ENCODE measurements at regions of chr9 and their contacts with region 1.

Region 1: DNA sequence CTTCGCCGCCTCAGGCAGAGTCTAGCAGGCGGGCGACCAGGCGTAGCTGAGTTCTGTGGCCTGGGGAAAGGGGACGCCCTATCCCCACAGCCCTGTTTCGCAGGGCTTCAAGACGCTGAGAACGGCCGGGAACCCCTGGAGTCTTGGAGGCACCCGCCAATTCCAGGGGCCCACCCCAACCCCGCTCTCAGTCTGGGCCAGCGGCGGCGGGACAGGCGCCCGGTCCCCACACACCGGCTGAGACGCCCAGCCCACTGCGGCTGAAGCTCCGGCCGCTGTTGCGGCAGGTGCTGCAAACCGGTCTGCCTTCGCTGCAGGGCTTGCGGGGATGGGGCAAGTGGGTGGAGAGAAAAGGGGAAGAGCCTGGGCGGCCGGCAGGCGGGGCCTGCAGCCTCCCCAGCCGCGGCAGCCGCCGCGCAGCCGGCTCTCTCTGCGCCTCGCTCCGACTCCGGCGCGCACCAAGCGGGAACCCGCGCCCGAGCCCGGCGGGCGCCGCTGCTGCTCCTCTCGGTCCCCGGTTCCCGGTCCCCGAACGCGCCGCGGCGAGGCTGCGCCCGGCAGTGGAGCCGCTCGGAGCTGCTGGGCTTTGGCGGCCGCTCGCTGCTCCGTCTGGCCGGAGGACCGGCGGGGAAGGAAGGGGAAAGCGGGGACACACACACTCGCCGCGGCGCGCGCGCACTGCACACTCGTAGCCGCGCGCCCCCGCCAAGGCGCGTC is at the start of gene PIP5K1B:
- DNase-seq: peak; percentile 69 to 90 (median 86)
- ATAC-seq: peak; percentile 92
- H3K4me3 ChIP-seq: peak within 1 kb of the TSS; percentile 54
- H3K27ac ChIP-seq: peak within 1 kb of the TSS; percentile 70
- H3K4me1 ChIP-seq: peaks cover 5% of the 10 kb centered on the region
- H3K27me3 ChIP-seq: no peaks in the 10 kb centered on the region
- total RNA-seq, gene PIP5K1B: 38.1 to 81.5 (median 70.0) TPM

Region 2: DNA sequence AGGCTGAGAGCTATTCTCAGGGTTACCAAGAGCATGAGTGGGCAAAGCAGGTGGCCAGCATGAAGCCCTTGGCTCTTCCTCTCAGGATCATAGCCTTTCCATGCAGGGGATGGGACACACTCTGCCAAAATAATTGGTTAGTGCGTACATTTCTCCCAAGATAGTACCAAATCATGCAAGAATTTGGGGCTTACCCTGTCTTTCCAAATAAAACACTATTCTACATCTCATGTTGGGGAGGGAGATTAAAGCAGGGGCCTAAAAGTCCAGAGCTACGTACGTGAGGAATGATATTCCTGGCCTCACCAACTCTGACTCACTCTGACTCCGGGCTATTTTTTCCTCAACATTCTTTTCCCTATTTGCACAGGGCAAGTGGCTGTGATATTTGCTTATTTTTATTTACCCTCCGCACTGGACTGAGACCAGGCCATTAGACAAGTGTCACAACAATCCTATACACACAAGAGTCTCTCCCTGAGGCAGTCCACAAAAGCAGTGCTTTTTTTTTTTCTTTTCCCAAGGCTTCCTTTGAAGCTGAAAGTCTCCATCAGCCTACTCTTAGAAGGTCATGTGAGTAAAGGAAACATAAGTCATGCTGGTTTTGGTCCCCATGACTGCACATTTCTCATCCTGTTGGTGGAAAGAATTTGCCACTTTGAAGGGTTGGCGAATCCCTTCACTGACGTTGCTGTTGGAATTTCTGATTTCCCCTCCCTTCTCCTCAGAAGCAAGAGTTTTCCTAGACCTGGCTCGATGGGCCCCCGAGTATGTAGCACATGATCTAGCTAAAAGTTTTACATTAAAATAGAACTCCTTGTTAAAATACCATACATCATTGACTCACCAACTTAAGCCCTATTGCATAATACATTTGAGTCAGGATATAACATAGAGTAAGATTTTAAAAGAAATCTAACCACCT is 204.3 kb before region 1 on chr9:
- intact Hi-C with region 1: no loop called
- DNase-seq: no peak
- ATAC-seq: peak; percentile 73 to 76
- H3K4me3 ChIP-seq: no peak overlapping the region
- H3K27ac ChIP-seq: peak overlapping the region; percentile 100
- H3K4me1 ChIP-seq: peaks cover 16% of the 10 kb centered on the region
- H3K27me3 ChIP-seq: no peaks in the 10 kb centered on the region

Region 3: GRCh38 chr9:68584189-68585033 is 120.6 kb before region 1 on chr9:
- intact Hi-C with region 1: loop called in 1 of 4 experiments (anchors 10 kb)
- DNase-seq: peak; percentile 85 to 91 (median 88)
- ATAC-seq: peak; percentile 95 to 97
- H3K4me3 ChIP-seq: no peak overlapping the region
- H3K27ac ChIP-seq: no peak overlapping the region
- H3K4me1 ChIP-seq: no peaks in the 10 kb centered on the region
- H3K27me3 ChIP-seq: no peaks in the 10 kb centered on the region

Region 4: GRCh38 chr9:68779558-68780384 is 74.8 kb after region 1 on chr9:
- intact Hi-C with region 1: loop called in 3 of 4 experiments (anchors 2 to 10 kb)
- DNase-seq: peak; percentile 96 to 98 (median 98)
- ATAC-seq: peak; percentile 97
- H3K4me3 ChIP-seq: peak overlapping the region; percentile 74
- H3K27ac ChIP-seq: peak overlapping the region; percentile 93
- H3K4me1 ChIP-seq: peaks cover 3% of the 10 kb centered on the region
- H3K27me3 ChIP-seq: no peaks in the 10 kb centered on the region

Region 5: GRCh38 chr9:68785965-68786364 is 81.0 kb after region 1 on chr9:
- intact Hi-C with region 1: loop called in 3 of 4 experiments (anchors 2 to 10 kb)
- DNase-seq: no peak
- ATAC-seq: no peak
- H3K4me3 ChIP-seq: no peak overlapping the region
- H3K27ac ChIP-seq: no peak overlapping the region
- H3K4me1 ChIP-seq: peaks cover 10% of the 10 kb centered on the region
- H3K27me3 ChIP-seq: no peaks in the 10 kb centered on the region

Region 6: DNA sequence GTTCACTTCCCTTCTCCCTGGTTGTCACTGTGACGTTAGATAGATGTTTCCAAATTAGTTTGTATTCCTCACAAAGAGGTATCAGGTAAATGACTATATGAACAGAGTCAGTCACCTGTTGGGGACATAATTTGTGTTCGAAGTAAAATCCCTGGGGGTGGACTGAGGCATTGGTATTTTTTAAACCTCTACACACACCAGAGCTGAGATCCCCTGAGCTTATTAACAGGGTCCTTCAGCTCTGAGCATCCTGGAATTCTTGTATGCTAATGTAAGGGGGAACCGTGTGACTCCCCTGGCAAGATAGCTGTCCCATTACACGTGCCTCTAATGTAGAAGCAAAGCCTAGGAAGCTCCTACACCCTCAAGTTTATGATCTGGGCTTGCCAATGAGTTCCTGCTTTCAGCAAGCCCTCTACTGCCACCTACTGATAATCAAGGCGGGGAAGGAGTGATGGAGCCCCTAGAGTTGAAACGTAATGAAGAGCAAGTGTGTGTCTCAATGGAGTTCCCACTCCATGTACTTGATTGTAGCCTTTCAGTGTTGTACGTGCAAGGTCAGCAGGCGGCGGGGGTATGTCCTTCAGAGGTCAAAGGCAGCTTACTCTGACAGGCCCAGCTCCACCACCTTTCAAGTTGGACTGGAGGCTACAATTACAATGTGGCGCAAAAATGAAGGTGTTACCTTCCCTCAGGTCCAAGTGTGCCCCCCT is 294.6 kb after region 1 on chr9:
- intact Hi-C with region 1: loop called in 1 of 4 experiments (anchors 10 kb)
- DNase-seq: peak; percentile 54 to 67 (median 62)
- ATAC-seq: peak; percentile 90
- H3K4me3 ChIP-seq: no peak overlapping the region
- H3K27ac ChIP-seq: no peak overlapping the region
- H3K4me1 ChIP-seq: peaks cover 2% of the 10 kb centered on the region
- H3K27me3 ChIP-seq: no peaks in the 10 kb centered on the region

Region 7: GRCh38 chr9:69035438-69036308 is 330.7 kb after region 1 on chr9 and contains the start of gene FXN:
- intact Hi-C with region 1: no loop called
- DNase-seq: peak; percentile 83 to 94 (median 94)
- ATAC-seq: peak; percentile 96
- H3K4me3 ChIP-seq: peak within 1 kb of the TSS; percentile 69
- H3K27ac ChIP-seq: peak within 1 kb of the TSS; percentile 73
- H3K4me1 ChIP-seq: peaks cover 3% of the 10 kb centered on the region
- H3K27me3 ChIP-seq: no peaks in the 10 kb centered on the region
- total RNA-seq, gene FXN: 24.6 to 28.9 (median 28.1) TPM